ENCODE measurements at regions of chr11 and their contacts with region 1.

Region 1: DNA sequence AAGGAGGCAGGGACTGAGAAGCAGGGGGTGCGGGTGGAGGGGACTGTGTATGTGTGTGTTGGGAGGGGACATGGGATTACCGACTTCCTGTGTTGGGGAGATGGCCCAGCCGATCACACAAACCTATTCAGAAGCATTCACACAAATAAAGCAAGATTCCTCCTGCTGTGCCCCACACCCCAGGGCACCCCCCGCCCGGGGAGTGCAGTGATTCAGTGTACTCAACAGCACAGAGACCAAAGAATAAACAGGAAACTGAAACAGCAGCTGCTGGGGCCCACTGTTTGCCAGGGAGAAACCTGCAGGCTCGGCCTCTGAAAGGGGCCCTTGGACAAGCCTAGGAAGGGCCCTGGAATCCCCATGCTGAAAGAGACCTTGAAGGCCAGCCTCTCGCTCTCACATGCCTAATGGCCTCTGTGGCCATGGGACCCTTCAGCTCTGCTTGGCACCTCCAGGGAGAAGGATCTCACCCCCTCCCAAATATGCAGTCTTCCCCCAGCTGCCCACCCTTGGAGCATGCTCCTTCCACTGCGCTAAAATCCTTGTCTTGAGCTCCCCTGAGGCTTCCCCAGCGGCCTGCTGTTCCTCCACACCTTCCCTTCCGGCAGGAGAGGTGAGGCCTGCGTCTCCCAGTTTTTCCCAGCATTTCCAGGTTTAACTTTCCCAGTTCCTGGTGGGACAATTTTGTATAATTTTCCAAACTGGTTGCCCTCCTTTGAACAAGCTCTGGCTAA is 72.9 kb downstream of the CSNK2A3 start:
- DNase-seq: no peak
- H3K4me3 ChIP-seq: no peak overlapping the region
- H3K27ac ChIP-seq: no peak overlapping the region
- H3K4me1 ChIP-seq: no peaks in the 10 kb centered on the region
- H3K27me3 ChIP-seq: no peaks in the 10 kb centered on the region
- CTCF ChIP-seq: no peak
- EP300 ChIP-seq: no peak
- POLR2A ChIP-seq: no peak

Region 2: GRCh38 chr11:11069841-11070835 is 210.0 kb before region 1 on chr11:
- intact Hi-C with region 1: no loop called
- DNase-seq: no peak
- H3K4me3 ChIP-seq: no peak overlapping the region
- H3K27ac ChIP-seq: no peak overlapping the region
- H3K4me1 ChIP-seq: no peaks in the 10 kb centered on the region
- H3K27me3 ChIP-seq: no peaks in the 10 kb centered on the region
- CTCF ChIP-seq: no peak
- EP300 ChIP-seq: no peak
- POLR2A ChIP-seq: no peak

Region 3: DNA sequence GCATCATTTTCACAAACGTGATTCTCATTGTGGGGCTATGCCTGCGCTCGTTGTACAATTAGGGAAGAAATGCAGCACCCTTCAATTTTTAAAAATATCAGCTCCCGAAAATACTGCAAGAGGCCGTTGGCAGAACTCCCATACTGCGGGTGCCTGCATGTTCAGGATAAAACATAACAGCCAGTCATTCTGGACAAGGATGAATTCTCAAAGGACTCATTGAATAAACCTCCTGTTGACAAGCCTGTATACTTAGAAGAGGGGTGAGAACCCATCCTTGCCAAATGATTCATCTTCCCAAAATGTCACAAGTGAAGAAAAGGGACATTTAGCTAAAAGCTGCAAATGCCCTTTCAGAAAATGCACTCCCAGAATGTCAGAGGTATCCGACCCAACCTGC is 68.9 kb before region 1 on chr11:
- intact Hi-C with region 1: no loop called
- DNase-seq: no peak
- H3K4me3 ChIP-seq: no peak overlapping the region
- H3K27ac ChIP-seq: no peak overlapping the region
- H3K4me1 ChIP-seq: no peaks in the 10 kb centered on the region
- H3K27me3 ChIP-seq: no peaks in the 10 kb centered on the region
- CTCF ChIP-seq: no peak
- EP300 ChIP-seq: no peak
- POLR2A ChIP-seq: no peak

Region 4: DNA sequence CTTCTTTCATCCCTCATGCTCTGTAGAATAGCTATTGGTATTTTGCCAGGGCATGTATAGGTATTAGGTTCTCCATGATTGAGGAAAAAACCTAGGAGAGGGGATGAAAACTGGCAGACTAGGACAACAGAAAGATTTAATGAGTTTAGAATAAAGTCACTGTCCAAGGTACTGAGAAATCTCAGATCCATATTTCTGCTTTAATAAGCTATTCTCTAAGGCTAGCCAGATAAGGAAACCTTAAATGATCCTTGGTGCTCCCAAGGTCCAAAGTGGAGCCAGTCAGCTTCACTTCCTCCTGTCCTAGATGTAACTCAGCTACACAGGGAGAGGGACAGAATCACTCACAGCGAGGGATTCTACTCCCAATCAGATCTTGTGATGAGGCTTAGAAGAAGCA is 86.7 kb after region 1 on chr11:
- intact Hi-C with region 1: no loop called
- DNase-seq: no peak
- H3K4me3 ChIP-seq: no peak overlapping the region
- H3K27ac ChIP-seq: no peak overlapping the region
- H3K4me1 ChIP-seq: no peaks in the 10 kb centered on the region
- H3K27me3 ChIP-seq: no peaks in the 10 kb centered on the region
- CTCF ChIP-seq: no peak
- EP300 ChIP-seq: no peak
- POLR2A ChIP-seq: no peak

Region 5: DNA sequence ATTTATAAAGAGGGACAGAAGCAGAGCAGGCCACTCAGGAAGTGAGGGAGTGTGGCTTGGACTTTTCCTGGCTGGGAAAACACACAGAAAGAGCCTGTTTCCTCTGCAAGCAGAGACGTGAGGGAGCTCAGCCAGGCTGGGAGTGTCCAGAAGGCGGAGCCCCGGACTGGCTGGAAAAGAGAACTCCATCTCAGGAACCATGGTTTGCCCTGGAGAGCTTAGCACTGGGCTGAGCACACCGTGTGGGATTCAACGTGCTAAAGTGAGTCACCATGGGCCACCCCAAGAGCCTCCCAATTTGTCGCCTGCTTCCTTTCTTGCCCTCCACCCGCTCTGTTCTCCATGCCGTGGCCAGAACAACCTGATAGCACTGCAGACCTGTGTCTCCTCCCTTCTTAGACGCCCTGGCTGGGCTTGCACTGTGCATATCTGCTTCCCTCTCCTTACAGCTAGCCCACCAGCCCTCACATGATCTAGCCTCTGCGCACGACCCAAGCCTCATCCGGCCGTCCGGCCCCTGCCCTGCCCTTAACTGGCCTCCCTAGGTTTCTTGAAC is 289.9 kb after region 1 on chr11:
- intact Hi-C with region 1: loop called in 1 of 4 experiments (anchors 10 kb)
- DNase-seq: peak in 3 of 5 donors; percentile 30 to 54 (median 42)
- H3K4me3 ChIP-seq: no peak overlapping the region
- H3K27ac ChIP-seq: no peak overlapping the region
- H3K4me1 ChIP-seq: peaks cover 2% of the 10 kb centered on the region
- H3K27me3 ChIP-seq: no peaks in the 10 kb centered on the region
- CTCF ChIP-seq: no peak
- EP300 ChIP-seq: no peak
- POLR2A ChIP-seq: no peak